Heart left ventricle (tissue), 16 donors: ENCODE measurements at regions of chr7 and their contacts with region 1.

Region 1: DNA sequence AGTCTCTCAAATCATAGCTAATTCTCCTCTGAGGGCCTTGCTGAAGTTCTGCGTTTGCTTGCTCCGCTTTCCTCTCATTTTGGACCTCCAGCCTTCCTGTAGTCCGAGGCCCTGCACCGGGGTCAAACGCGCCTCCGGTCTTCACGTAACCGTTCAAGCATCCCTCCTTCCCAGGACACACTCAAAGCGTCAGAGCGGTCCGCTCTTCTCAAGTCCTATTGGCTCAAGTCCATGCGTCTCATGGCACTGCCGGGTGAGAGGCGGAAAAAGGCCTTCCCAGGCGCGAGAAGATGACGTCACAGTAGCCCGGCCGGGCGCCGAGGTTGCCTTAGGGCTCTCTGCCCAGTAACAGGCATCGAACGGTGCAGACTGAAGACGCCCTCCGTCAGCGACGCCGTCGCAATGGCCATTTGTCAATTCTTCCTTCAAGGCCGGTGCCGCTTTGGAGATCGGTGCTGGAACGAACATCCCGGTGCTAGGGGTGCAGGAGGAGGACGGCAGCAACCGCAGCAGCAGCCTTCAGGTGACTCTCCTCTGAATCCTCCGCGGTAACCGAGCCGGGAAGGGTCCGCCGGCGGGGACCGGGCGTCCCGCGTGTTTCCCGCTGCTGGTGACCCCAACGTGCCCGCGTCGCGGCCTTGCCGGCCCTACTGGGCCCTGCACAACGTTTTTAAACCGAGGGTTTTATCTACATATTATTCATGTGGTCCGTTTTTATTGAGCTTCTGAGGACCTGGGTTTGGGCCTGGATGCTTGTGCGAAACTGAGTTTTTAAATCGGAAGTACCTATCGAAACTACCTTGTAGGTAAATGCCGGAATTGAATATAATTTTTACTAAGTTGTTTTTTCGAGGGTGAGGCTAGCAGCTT is at the start of gene NUP42:
- DNase-seq: peak; percentile 95 to 97 (median 96)
- ATAC-seq: peak; percentile 95 to 97 (median 97)
- H3K4me3 ChIP-seq: peak within 1 kb of the TSS; percentile 76 to 98 (median 88)
- H3K27ac ChIP-seq: peak within 1 kb of the TSS; percentile 87 to 97 (median 94)
- H3K4me1 ChIP-seq: peaks cover 4 to 42% (median 26%) of the 10 kb centered on the region in 12 donors
- H3K27me3 ChIP-seq: no peaks in the 10 kb centered on the region
- CTCF ChIP-seq: no peak
- POLR2A ChIP-seq: peak in 1 of 2 donors; percentile 68
- total RNA-seq, gene NUP42: 12.7 to 24.7 (median 18.9) TPM

Region 2: DNA sequence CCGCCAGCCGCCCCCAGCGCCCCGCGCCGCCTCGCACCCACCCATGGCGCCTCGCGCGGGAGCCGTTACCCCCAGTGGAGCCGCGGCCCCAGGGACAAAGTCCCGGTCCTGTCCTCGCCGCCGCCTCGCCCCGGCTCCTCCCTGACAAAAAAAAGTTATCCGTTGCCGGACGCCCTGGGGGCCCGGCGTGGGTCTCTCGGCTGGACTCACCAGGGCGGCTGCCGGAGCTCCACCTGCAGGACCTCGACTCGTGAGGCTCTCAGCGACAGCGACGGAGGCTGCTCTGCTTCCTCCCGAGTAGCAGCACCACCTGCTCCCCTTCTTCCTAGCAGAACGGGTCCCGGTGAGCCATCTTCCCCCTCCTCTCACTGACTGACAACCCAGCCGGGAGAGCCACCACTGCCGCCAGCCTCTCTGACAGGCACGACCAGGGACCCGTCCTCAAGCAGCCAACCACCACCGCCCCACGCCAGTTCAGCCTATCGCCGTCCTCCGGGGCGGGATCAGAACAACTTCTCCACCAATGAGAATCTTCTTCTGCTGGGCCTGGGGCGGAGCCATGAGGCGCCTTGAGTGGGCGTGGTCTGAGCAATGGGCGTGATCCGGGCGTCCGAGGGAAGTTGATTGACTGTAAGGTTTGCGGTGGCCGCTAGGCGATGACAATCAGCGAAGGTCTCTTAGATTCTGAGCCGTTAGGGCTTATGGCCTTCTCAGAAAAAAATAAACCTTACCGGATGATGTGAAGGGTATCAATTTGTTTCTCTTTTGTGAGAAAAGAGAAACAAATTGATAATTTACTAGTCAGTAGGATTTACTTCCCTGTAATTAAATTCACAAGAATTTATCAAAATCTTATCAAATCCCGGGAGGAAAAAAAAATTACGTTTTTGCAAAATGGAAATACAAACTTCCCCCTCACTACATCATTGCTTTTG is 167.9 kb before region 1 on chr7 and contains the start of gene HYCC1:
- intact Hi-C with region 1: loop called in 1 of 10 experiments (anchors 10 kb)
- DNase-seq: peak; percentile 99
- ATAC-seq: peak; percentile 100
- H3K4me3 ChIP-seq: peak within 1 kb of the TSS; percentile 73 to 94 (median 84)
- H3K27ac ChIP-seq: peak within 1 kb of the TSS; percentile 58 to 87 (median 84)
- H3K4me1 ChIP-seq: peaks cover 2 to 77% (median 35%) of the 10 kb centered on the region in 12 donors
- H3K27me3 ChIP-seq: no peaks in the 10 kb centered on the region
- CTCF ChIP-seq: peak; percentile 46 to 77 (median 62)
- POLR2A ChIP-seq: peak; percentile 98 to 100
- total RNA-seq, gene HYCC1: 31.4 to 48.2 (median 35.6) TPM

Region 3: DNA sequence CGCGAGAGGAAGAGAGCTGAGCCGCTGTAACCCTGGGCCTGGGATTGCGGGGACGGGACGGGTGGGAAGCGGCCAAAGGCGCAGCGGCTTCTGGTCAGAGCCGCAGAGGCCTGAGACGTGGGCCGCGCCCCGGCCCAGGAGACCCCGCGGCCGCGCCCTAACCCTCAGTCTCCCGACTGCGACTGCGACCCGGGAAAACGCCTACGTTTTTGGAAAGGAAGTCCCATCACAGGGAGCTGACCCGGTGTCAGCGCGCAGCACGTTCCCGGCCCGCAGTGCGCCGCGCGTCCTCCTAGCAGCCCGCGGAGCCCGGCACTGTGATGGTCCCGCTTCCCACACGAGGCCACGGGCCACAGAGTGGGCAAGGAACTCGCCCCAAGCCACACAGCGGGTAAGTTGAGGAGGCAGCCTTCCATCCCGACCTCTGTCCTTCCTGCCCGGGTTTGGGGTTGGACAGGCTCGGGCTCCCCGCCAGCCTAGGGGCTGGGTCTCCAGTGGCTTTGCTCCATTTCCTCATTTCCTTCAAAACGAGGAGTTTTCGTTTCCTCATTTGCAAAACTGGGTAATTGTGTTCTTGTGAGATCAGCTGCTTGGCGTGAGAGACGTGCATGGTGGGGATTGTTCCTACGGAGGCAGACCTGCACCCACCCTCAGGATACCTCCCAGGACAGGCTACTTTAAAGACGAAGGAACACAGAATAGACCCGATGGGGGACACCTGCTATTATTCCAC is 65.8 kb after region 1 on chr7:
- intact Hi-C with region 1: loop called in 6 of 10 experiments (anchors 2 to 5 kb)
- DNase-seq: peak; percentile 42 to 81 (median 52)
- ATAC-seq: peak; percentile 48 to 85 (median 76)
- H3K4me3 ChIP-seq: peak overlapping the region; percentile 11 to 72 (median 58)
- H3K27ac ChIP-seq: peak overlapping the region; percentile 16 to 90 (median 82)
- H3K4me1 ChIP-seq: peaks cover 0 to 33% (median 15%) of the 10 kb centered on the region in 12 donors
- H3K27me3 ChIP-seq: peaks cover 0 to 4% (median 0%) of the 10 kb centered on the region in 9 donors
- CTCF ChIP-seq: no peak
- POLR2A ChIP-seq: peak in 1 of 2 donors; percentile 14

Region 4: DNA sequence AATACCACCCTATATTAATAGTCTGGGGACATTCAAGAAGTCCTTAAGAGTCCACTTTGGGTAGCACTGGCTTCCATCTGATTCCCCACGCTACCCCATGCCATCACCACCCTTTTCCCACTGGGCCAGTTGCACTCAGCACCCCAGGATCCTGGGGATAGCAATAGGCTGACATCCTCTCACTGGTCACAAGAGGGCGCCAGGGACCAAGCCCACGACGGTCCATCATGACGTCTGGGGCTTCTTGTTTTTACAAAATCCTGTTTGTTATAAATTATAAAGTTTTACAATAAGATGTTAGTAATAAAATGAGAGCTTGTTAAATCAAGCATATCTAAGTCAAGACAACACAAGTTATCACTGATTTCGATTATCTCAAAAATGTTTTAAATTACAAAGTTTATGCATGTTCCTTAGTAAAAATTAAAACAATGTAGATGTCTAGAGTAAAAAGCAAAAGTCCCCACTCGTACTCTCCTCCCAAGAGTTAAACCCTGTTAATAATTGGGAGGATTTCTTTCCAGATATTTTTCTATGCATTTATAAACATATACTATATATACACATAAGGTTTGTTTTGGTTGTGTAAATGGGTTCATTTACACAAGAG is 80.0 kb after region 1 on chr7:
- intact Hi-C with region 1: loop called in 3 of 10 experiments (anchors 5 kb)
- DNase-seq: peak; percentile 40 to 67 (median 53)
- ATAC-seq: peak in 3 of 4 donors; percentile 73 to 85 (median 83)
- H3K4me3 ChIP-seq: no peak overlapping the region
- H3K27ac ChIP-seq: no peak overlapping the region
- H3K4me1 ChIP-seq: no peaks in the 10 kb centered on the region
- H3K27me3 ChIP-seq: no peaks in the 10 kb centered on the region
- CTCF ChIP-seq: peak; percentile 59 to 89 (median 75)
- POLR2A ChIP-seq: no peak

Region 5: DNA sequence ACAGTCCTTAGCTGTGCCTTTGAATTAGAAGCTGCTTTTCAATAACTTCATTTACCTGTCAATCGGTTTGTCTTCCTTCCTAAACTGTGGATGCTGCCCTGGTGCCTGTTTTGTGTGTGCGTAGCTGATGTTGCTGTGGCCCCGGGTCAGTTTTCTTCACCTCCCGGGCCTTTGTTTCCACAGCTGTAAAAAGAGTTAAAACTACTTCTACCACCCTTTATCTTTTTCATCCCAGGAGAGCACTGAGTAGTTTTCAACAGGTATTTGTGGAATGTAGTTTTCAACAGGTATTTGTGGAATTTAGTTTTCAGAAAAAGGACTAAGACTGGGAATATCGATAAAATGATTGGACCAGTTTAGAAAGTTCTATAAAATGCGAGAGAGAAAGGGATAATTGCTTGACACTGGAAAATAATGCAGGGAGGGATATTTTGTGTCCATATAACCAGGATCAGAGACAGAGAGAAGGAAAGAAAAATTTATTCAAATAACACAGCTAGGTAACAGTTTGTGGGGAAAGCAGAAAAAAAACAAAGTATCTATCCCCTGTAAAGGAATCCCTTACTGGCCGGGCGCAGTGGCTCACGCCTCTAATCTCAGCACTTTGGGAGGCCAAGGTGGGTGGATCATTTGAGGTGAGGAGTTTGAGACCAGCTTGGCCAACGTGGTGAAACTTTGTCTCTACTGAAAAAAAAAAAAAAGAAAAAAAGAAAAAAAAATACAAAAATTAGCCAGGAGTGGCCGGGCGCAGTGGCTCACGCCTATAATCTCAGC is 304.3 kb after region 1 on chr7:
- intact Hi-C with region 1: loop called in 1 of 10 experiments (anchors 10 kb)
- DNase-seq: no peak
- ATAC-seq: no peak
- H3K4me3 ChIP-seq: no peak overlapping the region
- H3K27ac ChIP-seq: no peak overlapping the region
- H3K4me1 ChIP-seq: peaks cover 0 to 7% (median 0%) of the 10 kb centered on the region in 12 donors
- H3K27me3 ChIP-seq: peaks cover 0 to 14% (median 2%) of the 10 kb centered on the region in 9 donors
- CTCF ChIP-seq: no peak
- POLR2A ChIP-seq: no peak